T-cell (primary cell): ENCODE measurements at regions of chr16 and their contacts with region 1.

Region 1: DNA sequence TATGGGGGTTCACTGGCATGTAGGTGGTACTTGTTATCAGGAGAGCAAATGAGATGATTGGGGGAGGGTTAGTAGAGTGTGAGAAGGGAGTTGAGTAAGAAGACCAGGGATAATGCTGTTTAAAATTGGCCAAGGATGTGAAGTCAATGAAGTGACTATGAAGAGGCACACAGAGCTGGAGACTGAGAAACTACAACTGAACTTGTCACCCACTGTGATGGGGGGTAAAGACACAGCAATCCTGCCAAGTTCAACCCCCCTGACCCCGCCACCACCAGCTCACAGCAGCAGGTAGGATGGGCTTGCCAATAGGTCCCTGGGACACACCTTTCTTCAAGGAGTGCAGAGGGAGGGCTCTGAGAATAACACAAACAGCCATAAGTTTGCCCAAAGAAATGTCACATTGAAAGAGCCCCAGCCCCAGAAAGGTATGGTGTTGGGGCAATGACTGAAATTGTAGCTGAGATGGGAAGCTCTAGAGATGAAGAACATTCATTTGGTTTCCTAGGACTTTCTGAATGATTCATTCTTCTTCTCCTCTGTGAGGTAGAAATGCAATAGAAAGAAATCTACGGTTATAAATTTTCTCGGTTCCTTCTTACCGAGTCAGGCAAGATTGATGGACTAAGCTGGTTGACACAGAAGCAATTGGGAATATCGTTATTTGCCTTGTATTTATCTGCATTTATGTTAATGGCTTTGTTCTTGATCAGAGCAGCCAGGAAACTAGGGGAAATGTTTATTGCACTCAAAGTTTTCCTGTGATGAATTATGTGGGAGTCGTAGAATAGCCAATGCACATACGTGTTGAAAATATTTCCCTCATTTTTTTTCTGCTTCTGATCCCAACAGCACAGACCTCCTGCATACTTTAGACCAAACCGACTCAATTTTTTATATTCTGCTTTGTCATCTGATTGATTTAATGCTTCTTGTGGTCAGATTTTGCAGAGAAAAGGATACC is 595.2 kb upstream of the CDH11 start:
- DNase-seq: no peak
- ATAC-seq: no peak
- H3K4me3 ChIP-seq: no peak overlapping the region
- H3K4me3 Mint-ChIP-seq: no peak overlapping the region
- H3K27ac ChIP-seq: no peak overlapping the region
- H3K27ac Mint-ChIP-seq: no peak overlapping the region
- H3K4me1 ChIP-seq: no peaks in the 10 kb centered on the region
- H3K4me1 Mint-ChIP-seq: no peaks in the 10 kb centered on the region
- H3K27me3 ChIP-seq: no peaks in the 10 kb centered on the region
- H3K27me3 Mint-ChIP-seq: no peaks in the 10 kb centered on the region

Region 2: DNA sequence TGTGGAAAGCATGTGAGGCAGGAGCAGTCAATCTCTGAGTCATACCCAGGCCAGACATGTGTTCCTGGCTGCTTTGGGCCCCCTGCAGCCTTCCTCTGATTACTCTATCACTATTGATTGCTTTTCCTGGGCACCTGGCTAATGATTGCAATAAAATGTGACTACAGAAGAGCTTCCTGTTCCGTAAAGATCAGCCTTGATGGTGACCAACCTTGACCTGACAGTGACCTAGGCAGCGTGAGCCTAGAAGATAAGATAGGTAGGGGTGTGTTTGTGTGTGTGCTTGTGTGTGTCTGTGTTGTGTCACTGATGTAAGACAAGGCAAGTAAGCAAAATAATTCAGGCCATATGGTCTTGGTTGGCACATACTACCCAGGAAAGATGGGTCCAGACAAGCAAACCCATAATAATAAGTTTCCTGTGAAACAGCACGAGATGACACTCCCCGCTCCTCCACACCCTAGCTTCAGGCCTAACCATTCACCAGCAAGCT is 227.4 kb before region 1 on chr16:
- CTCF ChIA-PET with region 1: no interaction called
- POLR2A ChIA-PET with region 1: interaction called in 1 of 2 experiments, 13 read pairs
- DNase-seq: no peak
- ATAC-seq: no peak
- H3K4me3 ChIP-seq: no peak overlapping the region
- H3K4me3 Mint-ChIP-seq: no peak overlapping the region
- H3K27ac ChIP-seq: no peak overlapping the region
- H3K27ac Mint-ChIP-seq: no peak overlapping the region
- H3K4me1 ChIP-seq: no peaks in the 10 kb centered on the region
- H3K4me1 Mint-ChIP-seq: no peaks in the 10 kb centered on the region
- H3K27me3 ChIP-seq: no peaks in the 10 kb centered on the region
- H3K27me3 Mint-ChIP-seq: no peaks in the 10 kb centered on the region

Region 3: DNA sequence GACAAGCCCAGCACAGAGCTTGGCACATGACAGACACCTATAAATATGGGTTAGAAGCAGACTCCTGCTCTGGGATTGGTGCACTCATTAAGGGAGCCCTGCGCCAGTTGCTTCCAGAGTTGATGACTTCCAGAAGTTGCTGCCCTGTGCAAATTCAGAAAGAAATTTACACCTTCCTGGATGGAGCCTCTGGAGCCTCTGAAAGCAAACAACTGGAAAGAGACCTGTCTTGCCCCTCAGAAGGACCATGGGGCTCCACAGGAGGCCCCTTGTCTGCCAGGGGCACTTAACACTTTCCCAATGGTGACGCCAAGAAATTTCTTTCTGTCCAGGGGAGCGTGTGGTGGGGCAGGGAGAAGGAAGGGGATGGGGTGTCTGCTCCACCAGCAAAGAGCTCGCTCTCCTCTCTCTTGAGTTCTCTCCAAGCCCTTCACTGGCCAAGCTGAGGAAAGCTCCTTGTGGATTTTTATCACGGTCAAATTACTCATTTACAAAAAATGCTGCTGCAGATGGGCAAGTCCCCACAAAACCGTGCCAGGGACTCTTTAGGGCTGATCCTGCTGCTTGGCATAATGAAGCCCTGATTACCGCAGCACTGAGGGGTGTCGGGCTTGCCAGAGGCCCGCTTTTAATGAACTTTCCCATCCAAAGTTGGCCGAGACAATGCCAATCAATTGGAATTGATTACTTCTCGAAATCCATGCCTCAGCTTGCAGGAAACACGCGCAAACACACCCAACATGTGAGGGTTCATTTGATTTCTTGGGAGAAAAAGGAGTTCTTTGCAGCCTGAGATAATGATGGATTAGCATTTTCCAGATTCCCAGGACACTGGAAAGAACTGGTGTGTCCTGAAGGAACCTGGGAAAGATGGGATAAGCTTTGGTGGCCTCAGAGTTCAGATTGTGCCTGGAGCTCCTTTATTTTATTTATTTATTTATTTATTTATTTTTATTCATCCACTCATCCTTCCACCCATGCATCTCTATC is 65.9 kb after region 1 on chr16:
- CTCF ChIA-PET with region 1: no interaction called
- POLR2A ChIA-PET with region 1: no interaction called
- DNase-seq: no peak
- ATAC-seq: no peak
- H3K4me3 ChIP-seq: no peak overlapping the region
- H3K4me3 Mint-ChIP-seq: no peak overlapping the region
- H3K27ac ChIP-seq: no peak overlapping the region
- H3K27ac Mint-ChIP-seq: no peak overlapping the region
- H3K4me1 ChIP-seq: no peaks in the 10 kb centered on the region
- H3K4me1 Mint-ChIP-seq: no peaks in the 10 kb centered on the region
- H3K27me3 ChIP-seq: peaks cover 0 to 8% of the 10 kb centered on the region in 2 experiments
- H3K27me3 Mint-ChIP-seq: peaks cover 6 to 9% of the 10 kb centered on the region in 2 donors